PC-3 (cell line): ENCODE measurements at regions of chr12 and their contacts with region 1.

Region 1: GRCh38 chr12:27523642-27524493 is at the start of gene PPFIBP1:
- DNase-seq: peak; percentile 100
- ATAC-seq: peak; percentile 91
- H3K4me3 ChIP-seq: peak within 1 kb of the TSS; percentile 80
- H3K27ac ChIP-seq: peak within 1 kb of the TSS; percentile 72
- H3K4me1 ChIP-seq: peaks cover 17% of the 10 kb centered on the region
- H3K27me3 ChIP-seq: no peaks in the 10 kb centered on the region
- CTCF ChIP-seq: peak; percentile 39
- total RNA-seq, gene PPFIBP1: 56.9 and 57.2 TPM in 2 replicates

Region 2: GRCh38 chr12:27424631-27425230 is 99.1 kb before region 1 on chr12:
- CTCF ChIA-PET with region 1: interaction called, 7 read pairs
- POLR2A ChIA-PET with region 1: no interaction called
- intact Hi-C with region 1: loop called (anchors 1 kb)
- DNase-seq: peak; percentile 66
- ATAC-seq: peak; percentile 93
- H3K4me3 ChIP-seq: no peak overlapping the region
- H3K27ac ChIP-seq: no peak overlapping the region
- H3K4me1 ChIP-seq: no peaks in the 10 kb centered on the region
- H3K27me3 ChIP-seq: no peaks in the 10 kb centered on the region
- CTCF ChIP-seq: peak; percentile 88

Region 3: DNA sequence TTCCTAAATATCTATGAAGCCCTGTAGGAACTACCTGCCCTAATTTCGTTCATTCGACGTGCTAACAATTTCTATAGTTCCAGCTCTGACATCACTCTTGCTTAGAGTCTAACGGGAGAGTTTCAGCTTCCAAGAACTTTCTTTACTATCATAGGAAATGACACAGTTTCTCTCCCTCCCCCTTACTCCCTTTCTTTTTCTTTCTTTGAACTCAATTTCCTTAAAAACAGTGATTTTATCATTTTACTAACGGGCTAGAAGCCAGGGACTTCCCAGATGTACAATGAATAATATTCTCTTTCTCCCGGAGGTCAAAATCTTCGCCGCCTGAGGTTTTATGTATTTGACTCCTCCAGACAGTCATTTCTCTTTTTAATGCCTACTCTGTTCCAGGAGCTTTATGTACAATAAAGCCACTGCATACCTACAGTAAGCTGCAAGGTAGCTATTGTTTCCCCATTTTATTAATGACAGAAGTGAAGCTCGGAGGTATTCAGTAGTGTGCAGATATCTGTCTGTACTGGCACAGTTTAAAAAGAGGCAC is 61.6 kb before region 1 on chr12:
- CTCF ChIA-PET with region 1: no interaction called
- POLR2A ChIA-PET with region 1: interaction called, 3 read pairs
- intact Hi-C with region 1: loop called (anchors 1 kb)
- DNase-seq: peak; percentile 73
- ATAC-seq: peak; percentile 68
- H3K4me3 ChIP-seq: peak overlapping the region; percentile 1; the same call in 1 of the 2 replicates
- H3K27ac ChIP-seq: peak overlapping the region; percentile 71
- H3K4me1 ChIP-seq: peaks cover 36% of the 10 kb centered on the region
- H3K27me3 ChIP-seq: no peaks in the 10 kb centered on the region
- CTCF ChIP-seq: no peak

Region 4: DNA sequence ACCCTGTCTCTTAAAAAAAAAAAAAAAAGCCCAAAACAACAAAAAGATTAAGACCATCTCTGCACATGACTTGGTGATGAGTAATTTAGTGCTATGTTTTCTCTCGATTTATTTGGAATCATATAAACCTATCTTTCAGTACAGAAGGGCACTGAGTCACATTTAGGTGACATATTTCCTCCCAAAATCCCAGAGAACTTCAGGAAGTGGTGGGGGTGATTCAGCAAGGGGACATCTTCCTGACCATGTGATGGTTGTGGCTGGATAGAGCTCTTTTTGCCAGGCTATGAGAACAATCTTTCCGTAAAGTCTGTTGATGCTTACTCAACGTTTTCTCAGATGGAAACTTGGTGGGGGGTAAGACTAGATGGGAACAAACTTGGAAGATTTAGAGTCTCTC is 50.1 kb after region 1 on chr12:
- CTCF ChIA-PET with region 1: no interaction called
- POLR2A ChIA-PET with region 1: interaction called, 10 read pairs
- intact Hi-C with region 1: loop called (anchors 1 kb)
- DNase-seq: peak; percentile 99
- ATAC-seq: peak; percentile 88
- H3K4me3 ChIP-seq: peak overlapping the region; percentile 29; the same call in 1 of the 2 replicates
- H3K27ac ChIP-seq: peak overlapping the region; percentile 96
- H3K4me1 ChIP-seq: peaks cover 66% of the 10 kb centered on the region
- H3K27me3 ChIP-seq: no peaks in the 10 kb centered on the region
- CTCF ChIP-seq: no peak

Region 5: DNA sequence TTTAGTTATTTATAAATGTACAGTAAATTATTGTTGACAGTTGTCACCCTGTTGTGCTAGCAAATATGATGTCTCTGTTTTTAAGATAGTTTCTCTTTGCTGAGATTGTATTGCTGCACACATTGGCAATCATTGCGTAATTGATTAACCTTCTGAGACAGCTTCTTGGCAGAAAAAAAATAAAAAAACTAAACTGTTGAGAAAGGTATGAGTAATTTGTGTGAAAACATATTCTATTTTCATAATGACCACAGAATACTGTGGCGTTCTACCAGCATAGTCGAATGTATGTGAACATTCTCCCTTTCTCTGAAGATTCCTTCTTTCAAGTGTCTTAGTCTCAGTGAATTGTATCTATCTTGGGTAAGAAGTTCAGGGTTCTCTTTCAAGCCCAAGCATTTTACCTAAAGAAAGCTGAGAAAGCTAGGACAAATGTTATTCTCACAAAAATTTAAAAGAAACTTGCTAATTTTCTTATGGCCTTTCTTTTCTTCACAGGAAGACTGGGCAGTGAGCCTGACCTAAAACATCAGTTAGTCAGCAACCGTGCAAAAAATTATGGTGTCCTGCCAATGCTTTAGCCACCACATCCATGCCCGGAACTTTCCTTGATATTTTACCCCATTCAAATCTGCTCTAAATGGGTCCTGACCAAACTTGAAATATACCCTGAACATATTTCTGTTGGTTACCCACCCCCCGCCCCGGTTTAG is 103.4 kb after region 1 on chr12:
- CTCF ChIA-PET with region 1: interaction called, 3 read pairs
- POLR2A ChIA-PET with region 1: interaction called, 11 read pairs
- intact Hi-C with region 1: loop called (anchors 2 kb)
- DNase-seq: peak; percentile 87
- ATAC-seq: peak; percentile 56
- H3K4me3 ChIP-seq: peak overlapping the region; percentile 24; the same call in 1 of the 2 replicates
- H3K27ac ChIP-seq: peak overlapping the region; percentile 86
- H3K4me1 ChIP-seq: peaks cover 58% of the 10 kb centered on the region
- H3K27me3 ChIP-seq: no peaks in the 10 kb centered on the region
- CTCF ChIP-seq: no peak

Region 6: DNA sequence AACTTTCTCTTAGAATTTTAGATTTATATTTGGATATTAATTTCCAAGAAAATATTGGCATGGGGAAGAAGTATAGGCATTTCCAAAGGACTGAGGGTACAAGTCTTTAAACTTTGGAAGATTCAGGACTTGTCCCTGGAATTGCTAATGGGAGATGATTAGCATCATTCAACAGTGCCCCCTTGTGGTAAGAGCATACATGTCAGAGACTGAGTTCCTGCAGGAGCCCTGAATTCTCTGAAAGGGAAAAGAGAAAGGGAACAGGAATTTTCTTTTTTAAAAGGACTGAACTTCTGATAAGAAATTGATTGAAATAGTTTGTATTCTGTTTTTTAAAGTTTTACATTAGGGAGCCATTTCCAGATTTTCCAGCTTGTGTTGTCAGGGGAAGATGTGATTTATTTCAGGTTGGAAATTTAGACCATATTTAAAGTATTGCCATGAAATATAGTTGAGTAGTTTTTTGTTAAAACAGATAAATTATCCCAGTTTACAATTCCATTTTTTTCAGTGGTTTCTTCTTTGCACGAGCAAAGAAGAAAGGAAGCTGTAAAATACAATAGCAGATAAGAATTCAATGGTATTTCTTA is 128.4 kb after region 1 on chr12:
- CTCF ChIA-PET with region 1: no interaction called
- POLR2A ChIA-PET with region 1: no interaction called
- intact Hi-C with region 1: loop called (anchors 1 kb)
- DNase-seq: peak; percentile 97
- ATAC-seq: peak; percentile 96
- H3K4me3 ChIP-seq: no peak overlapping the region
- H3K27ac ChIP-seq: peak overlapping the region; percentile 21
- H3K4me1 ChIP-seq: peaks cover 7% of the 10 kb centered on the region
- H3K27me3 ChIP-seq: no peaks in the 10 kb centered on the region
- CTCF ChIP-seq: peak; percentile 99

Region 7: GRCh38 chr12:27840244-27840999 is 316.6 kb after region 1 on chr12:
- CTCF ChIA-PET with region 1: interaction called, 13 read pairs
- POLR2A ChIA-PET with region 1: no interaction called
- intact Hi-C with region 1: no loop called
- DNase-seq: peak; percentile 48
- ATAC-seq: peak; percentile 30
- H3K4me3 ChIP-seq: no peak overlapping the region
- H3K27ac ChIP-seq: no peak overlapping the region
- H3K4me1 ChIP-seq: peaks cover 17% of the 10 kb centered on the region
- H3K27me3 ChIP-seq: no peaks in the 10 kb centered on the region
- CTCF ChIP-seq: peak; percentile 90